HCT116 (cell line): ENCODE measurements at regions of chr9 and their contacts with region 1.

Region 1: GRCh38 chr9:37144762-37145161 is 24.4 kb downstream of the ZCCHC7 start:
- DNase-seq: no peak
- ATAC-seq: peak; percentile 52; the same call in 1 of the 2 replicates
- H3K4me3 ChIP-seq: no peak overlapping the region
- H3K27ac ChIP-seq: no peak overlapping the region
- H3K4me1 ChIP-seq: peaks cover 6 to 7% of the 10 kb centered on the region in 2 experiments
- H3K27me3 ChIP-seq: no peaks in the 10 kb centered on the region
- CTCF ChIP-seq: no peak
- POLR2A ChIP-seq: no peak
- RAD21 ChIP-seq: no peak

Region 2: DNA sequence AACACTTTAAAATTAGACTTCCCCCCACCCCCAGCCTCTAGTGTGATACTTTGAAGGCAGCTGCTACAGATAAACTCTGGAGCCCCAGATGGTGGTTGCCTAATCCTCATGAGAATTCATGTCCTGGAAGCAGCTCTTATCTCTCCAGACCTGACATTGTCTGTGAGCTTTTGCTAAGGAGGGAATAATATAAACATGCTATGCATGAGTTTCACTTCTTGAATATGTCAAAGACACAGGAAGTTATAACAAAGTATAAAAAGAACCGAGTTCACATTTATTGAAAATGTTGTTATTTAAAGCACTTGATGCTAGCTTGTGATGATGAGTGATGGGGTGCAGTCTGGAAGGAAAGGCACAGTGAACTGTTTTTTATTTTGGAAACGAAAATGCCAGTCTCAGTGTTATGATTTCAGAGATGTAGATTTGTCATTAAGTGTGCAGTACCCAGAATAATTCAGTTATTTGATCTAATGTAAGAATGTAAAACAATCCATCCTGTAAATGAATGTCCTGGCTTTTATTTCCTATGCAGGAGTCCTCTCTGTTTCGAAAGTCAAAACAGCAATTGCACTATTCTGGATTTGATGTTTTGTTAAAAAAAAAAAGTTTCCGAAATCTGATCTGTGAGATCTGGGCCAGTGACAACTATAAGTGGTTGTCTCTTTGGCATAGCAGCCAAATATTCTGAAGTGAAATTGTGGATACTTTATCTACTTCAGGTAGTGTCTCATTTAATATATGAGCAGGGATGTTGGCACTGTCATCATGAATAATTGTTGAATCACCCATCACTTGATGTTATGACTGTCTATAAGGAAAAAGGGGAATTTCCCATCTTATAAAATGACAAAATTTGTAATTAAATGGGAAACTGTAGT is 52.6 kb after region 1 on chr9:
- CTCF ChIA-PET with region 1: no interaction called
- POLR2A ChIA-PET with region 1: no interaction called
- RAD21 ChIA-PET with region 1: no interaction called
- intact Hi-C with region 1: loop called (anchors 5 kb)
- DNase-seq: no peak
- ATAC-seq: no peak
- H3K4me3 ChIP-seq: no peak overlapping the region
- H3K27ac ChIP-seq: no peak overlapping the region
- H3K4me1 ChIP-seq: peaks cover 8% of the 10 kb centered on the region in 2 experiments
- H3K27me3 ChIP-seq: no peaks in the 10 kb centered on the region
- CTCF ChIP-seq: no peak
- POLR2A ChIP-seq: no peak
- RAD21 ChIP-seq: no peak